Posterior vena cava (tissue), 2 donors: ENCODE measurements at regions of chr3 and their contacts with region 1.

Region 1: GRCh38 chr3:147130461-147130860 is 275.9 kb downstream of the ZIC4 start:
- DNase-seq: no peak

Region 2: GRCh38 chr3:146948186-146948585 is 182.3 kb before region 1 on chr3:
- intact Hi-C with region 1: no loop called
- DNase-seq: no peak

Region 3: GRCh38 chr3:147117631-147118030 is 12.8 kb before region 1 on chr3:
- intact Hi-C with region 1: loop called in 1 of 2 experiments (anchors 1 kb)
- DNase-seq: no peak